ENCODE measurements at regions of chr11 and their contacts with region 1.

Region 1: DNA sequence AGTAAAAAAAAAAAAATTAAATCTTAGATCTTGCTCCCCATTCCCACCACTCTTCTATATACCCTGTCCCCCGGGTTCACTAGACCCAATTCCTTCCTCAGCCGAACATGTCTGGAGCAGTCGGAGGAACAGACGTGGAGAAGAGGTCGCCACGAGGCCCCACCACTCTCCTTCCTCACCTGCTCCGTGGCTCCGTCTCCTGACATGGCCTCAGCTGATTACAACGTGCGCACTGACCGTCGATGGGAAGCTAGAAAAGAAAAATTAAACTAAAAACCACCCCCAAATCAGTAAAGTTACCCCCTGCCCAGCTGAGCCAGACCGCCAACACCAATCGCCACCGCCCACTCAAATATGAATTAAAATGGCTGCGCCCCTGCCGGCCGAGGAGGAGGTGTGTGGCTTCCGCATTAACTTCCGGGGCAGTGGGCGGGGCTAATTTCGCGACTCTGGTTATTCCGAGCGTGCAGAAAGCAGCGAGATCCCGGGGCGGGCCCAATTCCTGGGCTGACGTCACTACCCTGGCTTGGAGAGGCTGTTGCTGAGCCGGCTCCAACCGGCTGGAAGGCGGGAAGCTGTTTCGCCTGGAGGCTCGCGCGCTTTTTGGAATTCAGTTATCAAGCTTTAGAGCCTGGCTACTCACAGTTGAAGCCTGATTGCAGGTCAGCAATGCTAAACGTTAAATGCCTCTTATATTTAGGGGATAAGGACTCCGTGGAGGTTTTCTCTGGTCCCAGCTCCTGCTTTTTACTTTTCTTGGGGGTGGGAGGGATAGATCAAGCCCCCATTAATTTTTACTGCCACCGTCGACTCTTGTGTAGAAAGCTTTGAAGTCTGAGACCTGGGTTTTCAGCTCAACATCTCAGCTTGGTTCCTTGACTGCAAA is at the start of gene CSTF3:
- DNase-seq: peak; percentile 97 to 100
- H3K4me3 ChIP-seq: peak within 1 kb of the TSS; percentile 76
- H3K27ac ChIP-seq: peak within 1 kb of the TSS; percentile 75
- H3K4me1 ChIP-seq: peaks cover 35% of the 10 kb centered on the region
- H3K27me3 ChIP-seq: no peaks in the 10 kb centered on the region
- CTCF ChIP-seq: peak; percentile 65
- total RNA-seq, gene CSTF3: 45.6 and 46.5 TPM in 2 replicates

Region 2: DNA sequence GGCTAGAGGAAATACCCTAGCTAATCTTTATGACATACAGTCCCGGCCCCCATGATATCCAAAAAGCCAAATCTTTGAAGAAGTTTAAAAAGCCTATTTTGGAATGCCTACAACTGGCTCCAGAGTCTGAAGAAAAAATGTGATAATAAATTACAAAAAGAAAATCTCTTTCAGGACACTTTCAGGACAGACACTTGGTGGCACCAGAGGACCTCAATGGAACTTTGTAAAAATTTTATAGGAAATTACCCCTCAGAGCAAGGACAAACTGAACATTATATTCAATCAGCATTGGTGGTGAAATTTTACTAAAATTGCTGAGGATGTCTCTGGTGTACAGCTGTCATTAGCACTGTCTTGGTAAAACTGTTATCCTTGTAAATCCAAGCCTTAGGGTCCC is 447.9 kb before region 1 on chr11:
- CTCF ChIA-PET with region 1: no interaction called
- POLR2A ChIA-PET with region 1: no interaction called
- intact Hi-C with region 1: loop called (anchors 10 kb)
- DNase-seq: peak in 1 of 2 experiments; percentile 11
- H3K4me3 ChIP-seq: no peak overlapping the region
- H3K27ac ChIP-seq: no peak overlapping the region
- H3K4me1 ChIP-seq: peaks cover 4% of the 10 kb centered on the region
- H3K27me3 ChIP-seq: no peaks in the 10 kb centered on the region
- CTCF ChIP-seq: peak; percentile 80

Region 3: DNA sequence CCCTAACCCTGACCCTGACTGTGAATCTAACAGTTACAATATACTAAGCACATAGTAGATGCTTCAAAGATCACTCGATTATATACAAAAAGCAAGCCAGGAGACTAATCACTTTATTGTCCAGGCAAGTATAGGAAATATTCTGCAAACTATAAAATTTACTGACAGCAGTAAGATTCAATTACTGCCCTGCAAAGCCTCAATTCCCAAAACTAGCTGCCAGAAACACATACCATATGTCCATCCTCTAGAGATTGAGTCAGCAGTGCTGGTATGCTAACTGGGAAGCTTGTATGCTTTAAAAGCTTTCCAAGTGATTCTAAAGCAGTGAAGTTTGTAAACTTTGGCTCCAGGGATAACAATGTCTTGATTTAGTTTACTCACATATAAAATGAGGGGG is 26.1 kb before region 1 on chr11:
- CTCF ChIA-PET with region 1: no interaction called
- POLR2A ChIA-PET with region 1: no interaction called
- intact Hi-C with region 1: no loop called
- DNase-seq: no peak
- H3K4me3 ChIP-seq: no peak overlapping the region
- H3K27ac ChIP-seq: no peak overlapping the region
- H3K4me1 ChIP-seq: no peaks in the 10 kb centered on the region
- H3K27me3 ChIP-seq: no peaks in the 10 kb centered on the region
- CTCF ChIP-seq: no peak

Region 4: GRCh38 chr11:33257897-33258630 is 96.7 kb after region 1 on chr11:
- CTCF ChIA-PET with region 1: no interaction called
- POLR2A ChIA-PET with region 1: no interaction called
- intact Hi-C with region 1: loop called (anchors 1 kb)
- DNase-seq: peak; percentile 68 to 85
- H3K4me3 ChIP-seq: peak overlapping the region; percentile 64
- H3K27ac ChIP-seq: peak overlapping the region; percentile 90
- H3K4me1 ChIP-seq: peaks cover 35% of the 10 kb centered on the region
- H3K27me3 ChIP-seq: no peaks in the 10 kb centered on the region
- CTCF ChIP-seq: peak; percentile 22; the same call in 1 of the 2 replicates

Region 5: DNA sequence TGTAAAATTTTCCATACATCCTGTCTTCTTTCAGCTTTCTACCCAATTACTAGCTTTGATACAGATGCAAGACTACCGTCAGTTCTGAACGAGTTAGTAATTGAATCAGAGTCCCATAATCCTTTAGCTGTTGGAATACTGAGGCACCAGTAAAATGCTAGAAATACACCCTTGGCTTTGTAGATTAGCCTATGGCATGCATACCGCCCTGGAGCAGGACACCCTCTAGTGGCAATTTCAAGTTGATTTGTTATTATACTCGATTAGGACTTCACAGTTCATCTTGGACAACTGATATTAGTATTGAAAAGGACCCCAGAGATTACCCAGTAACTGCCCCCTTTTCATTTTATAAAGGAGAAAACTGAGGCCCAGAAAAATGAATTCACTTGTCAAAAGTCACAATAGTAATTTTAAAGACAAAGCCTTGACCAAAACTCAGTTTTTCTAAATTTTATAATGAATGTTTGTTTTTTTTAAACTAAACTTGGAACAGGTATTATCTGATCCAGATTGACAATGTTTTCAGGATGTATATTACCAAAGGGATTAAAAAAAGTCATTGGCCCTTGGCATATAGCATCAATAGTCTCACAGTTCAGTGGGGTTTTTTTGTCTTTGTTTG is 168.5 kb after region 1 on chr11:
- CTCF ChIA-PET with region 1: interaction called, 5 read pairs
- POLR2A ChIA-PET with region 1: no interaction called
- intact Hi-C with region 1: loop called (anchors 1 kb)
- DNase-seq: peak; percentile 27 to 42
- H3K4me3 ChIP-seq: no peak overlapping the region
- H3K27ac ChIP-seq: no peak overlapping the region
- H3K4me1 ChIP-seq: no peaks in the 10 kb centered on the region
- H3K27me3 ChIP-seq: no peaks in the 10 kb centered on the region
- CTCF ChIP-seq: peak; percentile 83

Measured in PC-9 (cell line).